H1 (cell line): ENCODE measurements at regions of chr11 and their contacts with region 1.

Region 1: GRCh38 chr11:18203723-18204122 is 31.1 kb downstream of the MRGPRX4 start:
- DNase-seq: peak in 1 of 2 experiments; percentile 58
- H3K4me3 ChIP-seq: no peak overlapping the region
- H3K27ac ChIP-seq: no peak overlapping the region
- H3K4me1 ChIP-seq: no peaks in the 10 kb centered on the region
- H3K27me3 ChIP-seq: no peaks in the 10 kb centered on the region
- CTCF ChIP-seq: peak; percentile 53 to 91 (median 80)
- EP300 ChIP-seq: no peak
- POLR2A ChIP-seq: no peak
- RAD21 ChIP-seq: peak; percentile 90 to 94

Region 2: GRCh38 chr11:17719938-17720795 is 483.6 kb before region 1 on chr11:
- CTCF ChIA-PET with region 1: no interaction called
- POLR2A ChIA-PET with region 1: no interaction called
- DNase-seq: peak in 1 of 2 experiments; percentile 81
- H3K4me3 ChIP-seq: peak overlapping the region; percentile 17 to 56 (median 28); a peak in 7 of 8 replicates
- H3K27ac ChIP-seq: no peak overlapping the region
- H3K4me1 ChIP-seq: peaks cover 0 to 31% (median 14%) of the 10 kb centered on the region in 4 experiments; a peak in 6 of 7 replicates
- H3K27me3 ChIP-seq: peaks cover 57 to 88% (median 74%) of the 10 kb centered on the region in 4 experiments
- CTCF ChIP-seq: peak; percentile 46 to 78 (median 53)
- EP300 ChIP-seq: no peak
- POLR2A ChIP-seq: no peak
- RAD21 ChIP-seq: peak; percentile 18 to 42

Region 3: GRCh38 chr11:17991783-17992433 is 211.8 kb before region 1 on chr11:
- CTCF ChIA-PET with region 1: interaction called, 10 read pairs
- POLR2A ChIA-PET with region 1: no interaction called
- DNase-seq: no peak
- H3K4me3 ChIP-seq: no peak overlapping the region
- H3K27ac ChIP-seq: no peak overlapping the region
- H3K4me1 ChIP-seq: no peaks in the 10 kb centered on the region
- H3K27me3 ChIP-seq: no peaks in the 10 kb centered on the region
- CTCF ChIP-seq: peak in 2 of 3 experiments; percentile 55 to 71; a peak in 3 of 4 replicates
- EP300 ChIP-seq: no peak
- POLR2A ChIP-seq: no peak
- RAD21 ChIP-seq: peak; percentile 57 to 67

Region 4: DNA sequence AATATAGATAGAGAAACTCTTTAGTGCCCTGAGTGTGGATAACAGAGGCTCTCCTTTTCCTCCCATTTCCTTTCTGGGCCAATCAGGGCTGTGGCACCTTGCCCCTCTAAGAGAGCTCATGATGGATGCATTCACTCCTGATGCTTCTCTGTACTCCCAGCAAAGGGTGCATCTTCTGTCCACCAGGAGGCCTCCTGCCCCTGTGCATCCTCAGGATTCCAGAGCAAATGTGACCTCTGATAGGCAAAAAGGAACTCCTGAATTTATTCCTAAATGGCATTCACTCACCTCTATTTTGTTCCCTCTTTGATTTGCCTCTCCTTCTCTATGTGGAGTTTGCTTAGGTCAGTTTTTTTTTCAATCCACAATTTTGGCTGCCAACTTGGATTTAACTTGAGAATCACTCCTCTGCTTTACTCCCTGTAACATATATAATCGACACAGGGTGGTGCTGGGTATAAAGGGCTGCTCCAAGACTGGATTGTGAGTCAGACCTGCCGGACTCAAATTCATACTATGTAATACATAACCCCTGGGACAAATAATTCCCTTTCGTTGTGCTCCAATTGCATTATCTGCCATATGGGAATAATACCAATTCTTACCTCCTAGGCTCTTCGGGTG is 32.2 kb before region 1 on chr11:
- CTCF ChIA-PET with region 1: interaction called, 38 read pairs
- POLR2A ChIA-PET with region 1: no interaction called
- DNase-seq: no peak
- H3K4me3 ChIP-seq: no peak overlapping the region
- H3K27ac ChIP-seq: no peak overlapping the region
- H3K4me1 ChIP-seq: no peaks in the 10 kb centered on the region
- H3K27me3 ChIP-seq: no peaks in the 10 kb centered on the region
- CTCF ChIP-seq: peak; percentile 72 to 80 (median 74)
- EP300 ChIP-seq: no peak
- POLR2A ChIP-seq: no peak
- RAD21 ChIP-seq: peak; percentile 78

Region 5: DNA sequence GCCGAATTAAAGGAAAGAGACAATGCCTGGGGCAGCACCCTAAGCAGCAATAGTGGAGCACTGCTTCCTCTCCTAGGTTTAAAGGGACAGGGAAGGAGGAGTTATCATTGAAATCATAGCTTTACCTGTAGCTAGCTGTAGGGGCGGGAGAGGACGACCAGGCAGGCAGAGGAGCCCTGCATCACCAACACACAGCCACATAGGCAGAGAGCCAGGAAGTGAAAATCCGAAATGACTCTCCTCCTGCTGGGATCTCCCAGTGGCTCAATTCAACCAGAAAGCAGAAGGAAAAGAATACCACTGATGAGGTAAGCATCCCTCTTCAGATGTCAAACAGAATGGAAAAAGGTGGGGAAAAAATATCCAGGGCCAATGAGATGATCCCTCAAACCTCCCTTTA is 10.7 kb before region 1 on chr11:
- CTCF ChIA-PET with region 1: interaction called, 22 read pairs
- POLR2A ChIA-PET with region 1: no interaction called
- DNase-seq: no peak
- H3K4me3 ChIP-seq: no peak overlapping the region
- H3K27ac ChIP-seq: no peak overlapping the region
- H3K4me1 ChIP-seq: no peaks in the 10 kb centered on the region
- H3K27me3 ChIP-seq: no peaks in the 10 kb centered on the region
- CTCF ChIP-seq: peak; percentile 12 to 46 (median 22); a peak in 2 of 4 replicates
- EP300 ChIP-seq: no peak
- POLR2A ChIP-seq: no peak
- RAD21 ChIP-seq: peak in 1 of 2 experiments; percentile 20; a peak in 2 of 4 replicates

Region 6: DNA sequence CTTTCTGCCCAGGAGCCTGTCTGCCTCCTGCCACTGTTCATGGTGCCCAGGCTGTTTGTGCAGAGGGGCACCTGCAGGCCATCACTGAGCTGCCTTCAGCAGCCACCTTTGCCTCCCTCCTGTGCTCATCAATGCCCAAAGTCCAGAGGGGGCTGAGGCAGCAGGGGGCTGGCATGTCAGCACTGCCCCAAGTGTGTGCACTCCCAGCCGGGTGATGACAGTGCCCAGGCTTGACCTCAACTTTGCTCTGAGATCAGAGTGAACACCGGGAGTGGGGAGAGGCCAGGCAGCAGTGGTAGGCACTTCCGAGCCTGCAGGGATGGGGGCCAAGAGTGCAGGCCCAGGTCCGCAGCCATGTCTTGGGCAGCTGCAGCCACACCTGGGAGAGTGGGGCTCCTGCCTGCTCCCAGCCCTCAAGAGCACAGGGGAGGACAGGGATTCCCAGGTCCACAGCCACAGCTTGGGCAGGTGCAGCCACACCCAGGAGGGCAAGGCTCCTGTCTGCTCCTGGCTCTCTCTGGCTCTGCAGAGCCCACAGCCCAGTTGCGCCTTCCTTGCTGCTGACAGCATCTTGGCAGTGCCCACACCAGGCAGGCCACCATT is 17.7 kb after region 1 on chr11:
- CTCF ChIA-PET with region 1: interaction called, 17 read pairs
- POLR2A ChIA-PET with region 1: interaction called, 6 read pairs
- DNase-seq: no peak
- H3K4me3 ChIP-seq: no peak overlapping the region
- H3K27ac ChIP-seq: no peak overlapping the region
- H3K4me1 ChIP-seq: no peaks in the 10 kb centered on the region
- H3K27me3 ChIP-seq: no peaks in the 10 kb centered on the region
- CTCF ChIP-seq: no peak
- EP300 ChIP-seq: no peak
- POLR2A ChIP-seq: no peak
- RAD21 ChIP-seq: no peak

Region 7: DNA sequence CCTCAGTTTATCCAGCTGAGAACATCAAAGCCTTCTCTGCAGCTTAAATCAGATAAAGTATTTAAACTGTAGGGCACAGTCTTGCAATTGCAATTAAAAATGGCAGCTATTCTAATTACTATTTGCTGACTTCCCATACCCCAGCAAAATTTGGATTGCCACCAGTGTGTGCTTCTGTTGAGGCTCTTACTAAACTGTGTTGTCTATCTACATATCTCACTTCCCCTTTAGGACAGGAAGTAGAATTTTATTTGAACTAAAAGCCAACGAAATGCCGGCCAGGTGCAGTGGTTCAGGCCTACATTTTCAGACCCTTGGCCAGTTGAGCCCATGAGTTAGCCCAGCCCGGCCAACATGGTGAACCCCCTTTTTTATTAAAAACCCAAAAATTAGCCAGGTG is 25.8 kb after region 1 on chr11:
- CTCF ChIA-PET with region 1: interaction called, 17 read pairs
- POLR2A ChIA-PET with region 1: no interaction called
- DNase-seq: no peak
- H3K4me3 ChIP-seq: no peak overlapping the region
- H3K27ac ChIP-seq: no peak overlapping the region
- H3K4me1 ChIP-seq: no peaks in the 10 kb centered on the region
- H3K27me3 ChIP-seq: no peaks in the 10 kb centered on the region
- CTCF ChIP-seq: no peak
- EP300 ChIP-seq: no peak
- POLR2A ChIP-seq: no peak
- RAD21 ChIP-seq: no peak

Region 8: GRCh38 chr11:18259259-18259658 is 55.5 kb after region 1 on chr11:
- CTCF ChIA-PET with region 1: no interaction called
- POLR2A ChIA-PET with region 1: no interaction called
- DNase-seq: no peak
- H3K4me3 ChIP-seq: no peak overlapping the region
- H3K27ac ChIP-seq: no peak overlapping the region
- H3K4me1 ChIP-seq: no peaks in the 10 kb centered on the region
- H3K27me3 ChIP-seq: no peaks in the 10 kb centered on the region
- CTCF ChIP-seq: no peak
- EP300 ChIP-seq: no peak
- POLR2A ChIP-seq: no peak
- RAD21 ChIP-seq: no peak